Left ventricle myocardium inferior (tissue), 1 donor: ENCODE measurements at regions of chr6 and their contacts with region 1.

Region 1: DNA sequence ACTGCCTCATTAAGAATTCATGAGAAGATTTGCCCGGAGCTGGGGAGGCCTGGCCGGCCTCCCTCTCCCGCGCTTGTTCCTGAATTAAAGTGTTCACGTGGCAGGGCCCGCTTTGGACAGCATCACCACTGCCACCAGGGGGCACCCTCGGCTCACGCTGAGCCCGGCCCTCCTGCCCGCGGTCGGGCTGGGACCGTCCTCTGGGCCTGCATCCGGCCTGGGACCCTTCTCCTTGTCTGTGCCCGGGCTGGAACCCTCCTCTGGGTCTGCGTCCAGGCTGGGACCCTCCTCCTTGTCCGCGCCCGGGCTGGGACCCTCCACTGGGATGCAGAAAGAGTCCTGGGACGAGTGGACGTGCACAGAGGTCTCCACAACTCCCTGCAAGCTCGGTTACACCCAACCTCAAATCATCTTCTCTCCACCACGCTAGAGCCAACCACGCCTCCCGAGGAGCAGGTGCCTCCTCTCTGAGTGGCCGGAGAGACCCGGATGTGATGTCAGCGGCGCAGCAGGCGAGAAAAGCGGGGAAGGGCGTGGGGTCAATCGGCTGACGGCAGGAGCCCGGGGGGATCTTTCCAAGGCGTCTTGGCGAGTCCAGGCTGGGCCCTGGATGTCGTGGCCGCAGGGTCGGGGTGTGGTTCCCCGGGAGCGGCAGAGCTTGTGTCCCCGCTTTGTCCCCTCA is 50.9 kb upstream of the DACT2 start:
- DNase-seq: peak; percentile 77
- H3K4me3 ChIP-seq: no peak overlapping the region
- H3K27ac ChIP-seq: no peak overlapping the region
- H3K4me1 ChIP-seq: peaks cover 4% of the 10 kb centered on the region
- H3K27me3 ChIP-seq: peaks cover 76% of the 10 kb centered on the region
- CTCF ChIP-seq: peak; percentile 85

Region 2: GRCh38 chr6:168284217-168284616 is 86.2 kb before region 1 on chr6:
- intact Hi-C with region 1: no loop called
- DNase-seq: no peak
- H3K4me3 ChIP-seq: no peak overlapping the region
- H3K27ac ChIP-seq: no peak overlapping the region
- H3K4me1 ChIP-seq: no peaks in the 10 kb centered on the region
- H3K27me3 ChIP-seq: peaks cover 68% of the 10 kb centered on the region
- CTCF ChIP-seq: no peak

Region 3: DNA sequence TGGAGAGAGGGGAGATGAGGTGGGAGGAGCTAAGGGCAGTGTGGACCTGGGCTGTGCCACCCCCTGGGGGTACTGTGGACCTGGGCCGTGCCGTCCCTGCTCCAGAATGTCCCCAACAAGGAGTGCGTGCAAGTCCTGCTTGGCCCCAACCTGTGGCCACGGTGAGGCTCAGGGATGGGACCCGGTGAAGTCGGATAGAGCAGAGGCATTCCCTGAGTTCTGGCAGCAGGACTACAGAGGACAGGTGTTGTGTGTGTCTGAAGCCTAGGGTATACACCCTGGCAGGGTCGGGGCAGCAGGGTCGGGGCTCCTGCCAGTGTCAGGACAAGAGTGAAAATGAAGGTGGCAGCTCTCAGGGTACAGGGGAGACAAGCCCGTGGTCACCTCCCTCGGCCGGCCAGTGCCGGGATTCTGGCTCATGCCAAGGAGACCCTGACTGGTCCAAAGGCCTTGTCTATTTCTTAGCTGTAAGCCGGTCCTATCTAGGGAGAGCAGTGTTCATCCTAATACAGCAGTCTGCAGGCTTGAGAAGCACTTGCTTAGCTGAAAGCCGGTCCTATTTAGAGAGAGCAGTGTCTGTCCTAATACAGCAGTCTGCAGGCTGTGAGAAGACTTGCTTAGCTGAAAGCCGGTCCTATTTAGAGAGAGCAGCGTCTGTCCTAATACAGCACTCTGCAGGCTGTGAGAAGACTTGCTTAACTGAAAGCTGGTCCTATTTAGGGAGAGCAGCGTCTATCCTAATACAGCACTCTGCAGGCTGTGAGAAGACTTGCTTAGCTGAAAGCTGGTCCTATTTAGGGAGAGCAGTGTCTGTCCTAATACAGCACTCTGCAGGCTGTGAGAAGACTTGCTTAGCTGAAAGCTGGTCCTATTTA is 166.5 kb after region 1 on chr6:
- intact Hi-C with region 1: no loop called
- DNase-seq: no peak
- H3K4me3 ChIP-seq: no peak overlapping the region
- H3K27ac ChIP-seq: peak overlapping the region; percentile 74
- H3K4me1 ChIP-seq: peaks cover 59% of the 10 kb centered on the region
- H3K27me3 ChIP-seq: peaks cover 21% of the 10 kb centered on the region
- CTCF ChIP-seq: no peak

Region 4: DNA sequence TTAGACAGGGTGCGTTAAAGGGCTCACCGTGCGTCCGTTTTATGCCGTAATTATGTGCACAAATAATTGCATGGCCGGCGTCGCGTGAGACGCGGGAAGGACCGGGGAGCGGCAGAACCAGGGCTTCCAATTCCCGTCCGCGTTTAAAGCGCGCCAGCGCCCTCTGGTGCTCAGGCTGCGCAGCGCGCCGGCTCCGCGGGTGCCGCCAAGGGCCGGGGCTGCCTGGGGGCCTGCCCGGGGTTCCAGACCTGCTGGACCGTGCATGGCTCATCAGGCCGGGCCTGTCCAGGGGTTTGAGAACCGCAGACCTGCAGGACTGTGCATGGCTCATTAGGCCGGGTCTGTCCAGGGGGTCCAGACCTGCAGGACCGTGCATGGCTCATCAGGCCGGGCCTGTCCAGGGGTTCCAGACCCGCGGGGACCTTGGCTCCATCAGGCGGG is 514.2 kb after region 1 on chr6:
- intact Hi-C with region 1: loop called (anchors 5 kb)
- DNase-seq: peak; percentile 75
- H3K4me3 ChIP-seq: peak overlapping the region; percentile 54
- H3K27ac ChIP-seq: no peak overlapping the region
- H3K4me1 ChIP-seq: peaks cover 4% of the 10 kb centered on the region
- H3K27me3 ChIP-seq: peaks cover 54% of the 10 kb centered on the region
- CTCF ChIP-seq: peak; percentile 96